Activated CD4-positive, alpha-beta T cell treated with anti-CD3 and anti-CD28 coated beads, Interleukin-2, amount 10 ng/mL, durations not matched to agents 24 days and 14 days (primary cell): ENCODE measurements at regions of chr1 and their contacts with region 1.

Region 1: GRCh38 chr1:224851210-224851847 is 78.1 kb upstream of the DNAH14 start:
- DNase-seq: peak; percentile 88
- H3K4me3 Mint-ChIP-seq: no peak overlapping the region
- H3K27ac Mint-ChIP-seq: no peak overlapping the region
- H3K4me1 Mint-ChIP-seq: no peaks in the 10 kb centered on the region
- H3K27me3 Mint-ChIP-seq: peaks cover 2% of the 10 kb centered on the region

Region 2: GRCh38 chr1:224644553-224645154 is 206.7 kb before region 1 on chr1:
- intact Hi-C with region 1: loop called (anchors 2 kb)
- DNase-seq: peak; percentile 89
- H3K4me3 Mint-ChIP-seq: no peak overlapping the region
- H3K27ac Mint-ChIP-seq: no peak overlapping the region
- H3K4me1 Mint-ChIP-seq: peaks cover 8% of the 10 kb centered on the region
- H3K27me3 Mint-ChIP-seq: peaks cover 17% of the 10 kb centered on the region

Region 3: GRCh38 chr1:224700915-224701531 is 150.3 kb before region 1 on chr1:
- intact Hi-C with region 1: loop called (anchors 5 kb)
- DNase-seq: no peak
- H3K4me3 Mint-ChIP-seq: no peak overlapping the region
- H3K27ac Mint-ChIP-seq: no peak overlapping the region
- H3K4me1 Mint-ChIP-seq: no peaks in the 10 kb centered on the region
- H3K27me3 Mint-ChIP-seq: peaks cover 5% of the 10 kb centered on the region

Region 4: DNA sequence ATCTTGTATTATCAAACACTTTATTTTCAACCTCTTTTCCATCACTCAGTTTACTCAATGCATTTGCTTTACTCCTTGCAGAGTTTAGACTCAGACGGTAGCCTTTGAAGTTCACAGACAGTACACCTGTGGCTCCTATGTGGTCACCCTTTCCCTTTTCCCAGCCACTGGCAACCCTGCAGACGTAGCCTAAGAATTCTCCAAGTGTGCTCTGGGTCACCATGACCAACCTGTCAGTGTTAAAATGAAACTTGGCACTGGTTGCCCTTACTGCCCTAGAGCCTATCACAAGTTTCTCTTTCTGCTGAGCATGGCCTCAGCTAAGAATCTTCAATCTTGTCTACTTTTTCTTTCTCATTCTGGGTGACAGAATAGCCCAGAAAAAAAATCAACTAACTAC is 52.6 kb after region 1 on chr1:
- intact Hi-C with region 1: no loop called
- DNase-seq: no peak
- H3K4me3 Mint-ChIP-seq: no peak overlapping the region
- H3K27ac Mint-ChIP-seq: no peak overlapping the region
- H3K4me1 Mint-ChIP-seq: no peaks in the 10 kb centered on the region
- H3K27me3 Mint-ChIP-seq: peaks cover 21% of the 10 kb centered on the region

Region 5: GRCh38 chr1:225488676-225489075 is 637.3 kb after region 1 on chr1:
- intact Hi-C with region 1: no loop called
- DNase-seq: no peak
- H3K4me3 Mint-ChIP-seq: no peak overlapping the region
- H3K27ac Mint-ChIP-seq: no peak overlapping the region
- H3K4me1 Mint-ChIP-seq: no peaks in the 10 kb centered on the region
- H3K27me3 Mint-ChIP-seq: peaks cover 22% of the 10 kb centered on the region